ENCODE measurements at regions of chr12 and their contacts with region 1.

Region 1: GRCh38 chr12:65282840-65283239 is 4.4 kb downstream of the MSRB3 start:
- DNase-seq: no peak
- H3K4me3 Mint-ChIP-seq: no peak overlapping the region
- H3K27ac Mint-ChIP-seq: no peak overlapping the region
- H3K4me1 Mint-ChIP-seq: no peaks in the 10 kb centered on the region
- H3K27me3 Mint-ChIP-seq: peaks cover 21% of the 10 kb centered on the region
- CTCF ChIP-seq: no peak

Region 2: GRCh38 chr12:64883596-64884542 is 399.0 kb before region 1 on chr12:
- CTCF ChIA-PET with region 1: no interaction called
- intact Hi-C with region 1: loop called (anchors 2 kb)
- DNase-seq: no peak
- H3K4me3 Mint-ChIP-seq: no peak overlapping the region
- H3K27ac Mint-ChIP-seq: no peak overlapping the region
- H3K4me1 Mint-ChIP-seq: no peaks in the 10 kb centered on the region
- H3K27me3 Mint-ChIP-seq: no peaks in the 10 kb centered on the region
- CTCF ChIP-seq: no peak

Region 3: DNA sequence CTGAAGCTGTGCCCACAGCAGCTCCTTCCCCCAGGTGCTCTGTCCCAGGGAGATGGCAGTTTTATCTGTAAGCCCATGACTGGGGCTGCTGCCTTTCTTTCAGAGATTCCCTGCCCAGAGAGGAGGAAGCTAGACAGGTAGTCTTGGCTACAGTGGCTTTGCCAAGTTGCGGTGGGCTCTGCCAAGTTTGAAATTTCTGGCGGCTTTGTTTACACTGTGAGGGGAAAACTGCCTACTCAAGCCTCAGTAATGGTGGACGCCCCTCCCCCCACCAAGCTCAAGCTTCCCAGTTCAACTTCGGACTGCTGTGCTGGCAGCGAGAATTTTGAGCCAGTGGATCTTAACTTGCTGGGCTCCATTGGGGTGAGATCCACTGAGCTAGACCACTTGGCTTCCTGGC is 120.3 kb after region 1 on chr12:
- CTCF ChIA-PET with region 1: no interaction called
- intact Hi-C with region 1: no loop called
- DNase-seq: no peak
- H3K4me3 Mint-ChIP-seq: no peak overlapping the region
- H3K27ac Mint-ChIP-seq: no peak overlapping the region
- H3K4me1 Mint-ChIP-seq: no peaks in the 10 kb centered on the region
- H3K27me3 Mint-ChIP-seq: no peaks in the 10 kb centered on the region
- CTCF ChIP-seq: no peak

Region 4: DNA sequence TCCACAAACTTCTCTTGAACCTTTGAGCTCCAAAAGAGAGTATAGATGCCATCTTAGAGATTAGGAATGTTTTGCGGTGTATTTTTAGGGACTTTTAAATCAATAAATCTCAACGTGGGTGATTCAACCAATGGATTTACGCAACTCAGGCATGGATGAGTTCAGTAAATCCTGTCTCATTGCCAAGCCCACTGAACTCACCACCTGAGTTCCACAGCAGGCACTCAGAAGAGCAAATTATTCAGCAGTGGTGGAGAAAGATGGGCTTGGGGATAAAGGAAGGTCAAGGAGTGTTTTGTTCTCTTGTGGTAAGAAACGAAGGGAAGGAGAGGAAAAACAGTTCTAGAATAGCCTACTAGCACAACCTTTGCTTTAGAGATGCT is 472.7 kb after region 1 on chr12:
- CTCF ChIA-PET with region 1: no interaction called
- intact Hi-C with region 1: no loop called
- DNase-seq: no peak
- H3K4me3 Mint-ChIP-seq: no peak overlapping the region
- H3K27ac Mint-ChIP-seq: no peak overlapping the region
- H3K4me1 Mint-ChIP-seq: no peaks in the 10 kb centered on the region
- H3K27me3 Mint-ChIP-seq: peaks cover 24% of the 10 kb centered on the region
- CTCF ChIP-seq: no peak

Measured in Calu3 (cell line).